MCF 10A (cell line): ENCODE measurements at regions of chr2 and their contacts with region 1.

Region 1: GRCh38 chr2:143110758-143111428 is 18.3 kb upstream of the ARHGAP15 start:
- DNase-seq: peak; percentile 86
- H3K4me3 Mint-ChIP-seq: no peak overlapping the region
- H3K27ac Mint-ChIP-seq: no peak overlapping the region
- H3K4me1 Mint-ChIP-seq: peaks cover 8% of the 10 kb centered on the region
- H3K27me3 Mint-ChIP-seq: no peaks in the 10 kb centered on the region
- CTCF ChIP-seq: peak; percentile 77

Region 2: GRCh38 chr2:141820893-141821292 is 1290.0 kb before region 1 on chr2:
- CTCF ChIA-PET with region 1: no interaction called
- POLR2A ChIA-PET with region 1: no interaction called
- intact Hi-C with region 1: no loop called
- DNase-seq: no peak
- H3K4me3 Mint-ChIP-seq: no peak overlapping the region
- H3K27ac Mint-ChIP-seq: no peak overlapping the region
- H3K4me1 Mint-ChIP-seq: no peaks in the 10 kb centered on the region
- H3K27me3 Mint-ChIP-seq: peaks cover 6% of the 10 kb centered on the region
- CTCF ChIP-seq: no peak

Region 3: DNA sequence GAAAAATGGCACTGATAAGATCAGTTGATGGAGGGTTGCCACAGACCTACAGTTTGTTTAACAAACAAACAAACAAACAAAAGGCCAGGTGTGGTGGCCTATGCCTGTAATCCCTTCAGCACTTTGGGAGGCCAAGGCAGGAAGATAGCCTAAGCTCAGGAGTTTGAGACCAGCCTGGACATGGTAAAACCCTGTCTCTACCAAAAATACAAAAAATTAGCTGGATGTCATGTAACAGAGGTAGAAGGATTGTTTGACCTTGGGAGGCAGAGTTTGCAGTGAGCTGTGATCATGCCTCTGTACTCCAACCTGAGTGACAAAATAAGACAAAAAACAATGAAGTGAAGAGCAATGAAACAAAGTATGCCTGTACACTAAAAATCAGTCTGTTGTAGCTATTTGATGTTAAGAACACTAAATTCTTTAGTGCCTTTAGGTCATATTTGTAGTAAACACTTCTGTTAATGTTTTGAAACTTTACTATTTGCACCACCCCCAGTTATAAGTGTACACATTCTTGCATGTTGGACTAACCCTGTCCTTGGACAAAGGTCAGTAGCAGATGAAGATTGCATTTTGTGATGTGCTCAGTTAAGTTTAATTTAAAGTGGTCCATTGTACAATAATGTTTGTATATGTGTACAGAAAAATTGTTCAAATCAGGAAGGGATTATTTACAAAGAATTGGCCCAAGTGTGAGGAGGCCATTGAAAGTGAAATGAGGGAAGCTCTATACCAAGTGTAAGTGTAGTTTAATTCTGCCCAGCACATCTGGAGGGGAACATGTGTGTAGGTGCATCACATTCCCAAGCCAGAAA is 159.5 kb before region 1 on chr2:
- CTCF ChIA-PET with region 1: no interaction called
- POLR2A ChIA-PET with region 1: no interaction called
- intact Hi-C with region 1: no loop called
- DNase-seq: no peak
- H3K4me3 Mint-ChIP-seq: no peak overlapping the region
- H3K27ac Mint-ChIP-seq: peak overlapping the region; percentile 48
- H3K4me1 Mint-ChIP-seq: peaks cover 6% of the 10 kb centered on the region
- H3K27me3 Mint-ChIP-seq: no peaks in the 10 kb centered on the region
- CTCF ChIP-seq: no peak

Region 4: DNA sequence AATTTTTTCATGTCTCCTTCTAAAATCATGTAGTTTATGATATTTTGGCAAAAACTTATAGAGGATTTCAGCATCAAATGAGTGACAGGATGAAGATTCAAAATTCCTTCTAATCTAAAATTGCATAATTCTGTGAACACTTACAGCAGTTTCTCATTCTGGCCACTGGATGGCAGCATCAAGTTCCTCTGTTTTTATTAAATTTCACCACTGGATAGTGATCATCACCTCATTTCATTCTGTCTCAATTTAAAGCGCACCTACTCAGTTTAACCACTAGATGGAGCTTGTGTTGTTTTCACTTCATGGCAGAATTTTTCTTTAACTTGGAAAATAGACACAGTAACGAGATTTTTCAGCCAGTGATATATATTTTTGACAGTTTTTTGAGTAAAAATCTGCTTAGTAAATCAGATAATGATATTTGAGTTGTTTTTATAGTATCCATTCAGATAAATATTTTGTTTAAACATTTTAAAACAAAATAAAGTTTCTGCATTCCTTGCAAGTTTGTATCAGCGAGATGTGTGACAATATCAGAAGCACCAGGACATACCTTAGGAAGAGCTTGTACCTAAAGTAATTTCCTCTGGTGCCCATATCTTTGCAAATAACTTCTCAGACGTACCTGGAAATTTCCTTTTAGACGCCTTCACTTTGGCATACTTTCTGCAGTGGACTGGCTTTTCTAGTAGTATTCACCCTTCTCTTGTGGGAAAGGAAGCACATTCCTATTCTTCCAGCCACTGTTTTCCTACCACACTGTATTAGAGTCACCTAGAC is 76.4 kb before region 1 on chr2:
- CTCF ChIA-PET with region 1: interaction called, 14 read pairs
- POLR2A ChIA-PET with region 1: interaction called, 3 read pairs
- intact Hi-C with region 1: loop called (anchors 2 kb)
- DNase-seq: peak; percentile 82
- H3K4me3 Mint-ChIP-seq: no peak overlapping the region
- H3K27ac Mint-ChIP-seq: no peak overlapping the region
- H3K4me1 Mint-ChIP-seq: no peaks in the 10 kb centered on the region
- H3K27me3 Mint-ChIP-seq: no peaks in the 10 kb centered on the region
- CTCF ChIP-seq: peak; percentile 79

Region 5: GRCh38 chr2:143083636-143084035 is 27.3 kb before region 1 on chr2:
- CTCF ChIA-PET with region 1: interaction called, 10 read pairs
- POLR2A ChIA-PET with region 1: no interaction called
- intact Hi-C with region 1: no loop called
- DNase-seq: peak; percentile 76
- H3K4me3 Mint-ChIP-seq: peak overlapping the region; percentile 33
- H3K27ac Mint-ChIP-seq: peak overlapping the region; percentile 35
- H3K4me1 Mint-ChIP-seq: peaks cover 6% of the 10 kb centered on the region
- H3K27me3 Mint-ChIP-seq: no peaks in the 10 kb centered on the region
- CTCF ChIP-seq: no peak

Region 6: GRCh38 chr2:143205106-143205764 is 94.3 kb after region 1 on chr2:
- CTCF ChIA-PET with region 1: interaction called, 17 read pairs
- POLR2A ChIA-PET with region 1: no interaction called
- intact Hi-C with region 1: no loop called
- DNase-seq: peak; percentile 9
- H3K4me3 Mint-ChIP-seq: no peak overlapping the region
- H3K27ac Mint-ChIP-seq: no peak overlapping the region
- H3K4me1 Mint-ChIP-seq: peaks cover 5% of the 10 kb centered on the region
- H3K27me3 Mint-ChIP-seq: no peaks in the 10 kb centered on the region
- CTCF ChIP-seq: peak; percentile 43

Region 7: DNA sequence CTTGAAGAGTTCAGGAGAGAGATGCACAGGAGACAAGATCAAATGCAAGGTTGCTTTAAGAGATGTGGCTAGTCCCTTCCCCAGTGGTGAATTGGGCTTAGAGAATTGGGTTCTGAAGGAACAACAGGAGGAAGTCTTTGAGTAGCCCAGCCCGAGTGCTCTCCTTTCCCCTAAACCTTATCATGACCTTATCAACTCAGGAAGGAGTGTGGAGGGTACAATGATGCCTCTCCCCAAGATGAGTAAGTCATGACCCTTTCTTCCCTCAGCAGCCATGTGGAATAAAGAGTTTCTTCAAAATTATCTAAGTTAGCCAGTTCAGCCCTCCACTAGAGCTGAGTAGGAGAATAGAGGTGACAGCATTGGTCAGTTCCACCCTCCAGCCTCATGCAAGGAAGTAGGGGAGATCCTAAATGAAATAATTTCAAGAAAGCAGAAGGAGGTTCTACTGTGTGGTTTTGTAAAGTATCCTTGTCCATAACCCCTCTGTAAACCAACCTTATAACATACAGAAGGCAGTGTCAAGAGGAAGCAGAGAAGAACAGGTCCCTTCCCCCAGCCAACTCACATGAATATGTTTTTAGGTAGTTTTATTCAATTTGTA is 106.7 kb after region 1 on chr2:
- CTCF ChIA-PET with region 1: interaction called, 22 read pairs
- POLR2A ChIA-PET with region 1: interaction called, 3 read pairs
- intact Hi-C with region 1: loop called (anchors 1 kb)
- DNase-seq: no peak
- H3K4me3 Mint-ChIP-seq: no peak overlapping the region
- H3K27ac Mint-ChIP-seq: no peak overlapping the region
- H3K4me1 Mint-ChIP-seq: no peaks in the 10 kb centered on the region
- H3K27me3 Mint-ChIP-seq: no peaks in the 10 kb centered on the region
- CTCF ChIP-seq: no peak

Region 8: DNA sequence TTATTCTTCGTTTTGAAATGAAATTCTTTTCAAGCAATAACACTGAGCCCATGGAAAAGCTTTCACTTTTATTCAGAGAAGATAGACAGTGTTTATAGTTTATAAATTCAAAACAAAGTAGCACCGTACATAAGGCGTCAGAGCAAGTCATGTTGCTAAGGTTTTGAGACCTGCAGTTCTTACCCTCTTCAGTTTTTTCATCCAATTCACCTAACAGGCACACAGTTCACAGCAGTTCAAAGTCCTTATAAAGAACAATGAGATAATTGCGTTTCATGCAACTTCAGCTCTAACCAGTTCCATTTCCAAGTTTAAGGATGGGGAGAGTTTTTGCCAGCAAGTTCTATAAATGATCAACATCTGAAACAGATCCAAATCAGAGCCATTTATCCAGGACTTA is 115.0 kb after region 1 on chr2:
- CTCF ChIA-PET with region 1: interaction called, 22 read pairs
- POLR2A ChIA-PET with region 1: interaction called, 4 read pairs
- intact Hi-C with region 1: loop called (anchors 1 kb)
- DNase-seq: no peak
- H3K4me3 Mint-ChIP-seq: no peak overlapping the region
- H3K27ac Mint-ChIP-seq: no peak overlapping the region
- H3K4me1 Mint-ChIP-seq: no peaks in the 10 kb centered on the region
- H3K27me3 Mint-ChIP-seq: no peaks in the 10 kb centered on the region
- CTCF ChIP-seq: no peak